ENCODE measurements at regions of chr17 and their contacts with region 1.

Region 1: DNA sequence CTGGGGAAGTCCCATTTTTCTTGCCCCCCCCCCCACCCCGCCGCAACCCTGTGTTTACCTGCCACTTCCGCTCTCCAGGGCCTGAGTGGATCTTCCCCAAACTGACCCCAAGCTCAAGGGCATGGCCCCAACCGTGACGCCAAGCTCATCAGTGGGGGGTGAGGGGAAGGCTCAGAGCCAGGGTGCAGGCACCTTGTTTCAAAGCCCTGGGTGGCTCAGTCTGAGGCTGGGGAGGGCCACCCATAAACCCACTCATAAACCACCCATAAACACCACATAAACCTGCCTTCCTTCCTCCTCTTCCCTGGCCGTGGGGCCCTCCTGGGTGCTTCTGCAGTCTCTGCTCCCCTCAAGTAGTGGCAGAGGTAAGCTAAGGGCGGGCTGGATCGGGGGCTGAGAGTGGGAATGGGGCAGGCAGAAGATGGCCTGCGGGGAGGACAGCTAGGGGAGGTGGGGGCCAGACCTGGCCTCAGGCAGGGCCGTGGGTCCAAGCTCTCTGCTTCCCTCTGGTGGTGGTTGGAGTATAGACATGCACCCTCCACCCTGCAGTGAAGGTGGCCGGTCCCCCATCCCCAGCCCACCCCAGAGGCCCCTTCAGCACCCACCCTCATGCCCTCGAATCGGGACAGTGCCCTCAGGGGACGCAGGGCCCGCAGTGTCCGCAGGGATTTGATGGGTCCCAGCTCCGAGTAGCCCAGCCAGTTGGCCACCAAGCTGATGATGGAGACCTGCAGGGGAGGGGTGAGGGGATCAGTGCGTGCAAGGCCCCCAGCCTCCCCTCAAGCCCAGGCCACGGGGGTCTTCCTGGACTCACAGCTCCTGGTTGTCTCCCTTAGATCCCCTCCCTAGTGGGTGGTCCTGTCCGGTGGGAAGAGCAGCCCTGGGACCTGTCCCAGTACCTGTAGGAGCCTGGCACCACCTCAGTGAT is 14.6 kb upstream of the CD79B start:
- DNase-seq: peak; percentile 44 to 68 (median 63)
- H3K4me3 ChIP-seq: peak overlapping the region in 2 of 7 experiments; percentile 6 to 53
- H3K27ac ChIP-seq: no peak overlapping the region
- H3K4me1 ChIP-seq: peaks cover 0 to 37% (median 23%) of the 10 kb centered on the region in 4 experiments
- H3K27me3 ChIP-seq: no peaks in the 10 kb centered on the region

Region 2: DNA sequence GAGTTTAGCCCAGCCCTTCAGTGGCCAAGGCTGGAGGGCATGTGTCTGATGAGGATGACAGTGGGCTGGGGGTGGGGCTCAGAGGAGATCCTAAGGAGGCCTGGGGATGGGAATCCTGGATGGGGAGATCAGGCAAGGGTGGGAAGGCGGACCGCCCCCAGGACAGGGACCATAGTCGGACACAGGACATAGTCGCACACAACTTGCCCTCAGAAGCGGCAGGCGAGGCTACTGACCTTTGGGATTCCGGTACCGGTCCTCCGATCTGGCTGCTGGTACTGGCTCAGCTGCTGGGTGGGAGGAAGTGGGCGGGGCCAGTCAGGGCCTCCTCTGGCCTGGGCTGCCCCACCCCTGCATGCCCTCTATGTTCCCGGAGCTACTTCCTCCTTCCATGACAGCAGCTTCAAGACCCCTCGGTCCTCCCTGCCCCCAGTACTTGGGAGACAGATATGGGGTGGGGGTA is 15.6 kb before region 1 on chr17:
- CTCF ChIA-PET with region 1: interaction called, 37 read pairs
- POLR2A ChIA-PET with region 1: no interaction called
- DNase-seq: peak; percentile 60 to 74 (median 72)
- H3K4me3 ChIP-seq: peak overlapping the region in 6 of 7 experiments; percentile 52 to 85 (median 68)
- H3K27ac ChIP-seq: peak overlapping the region in 1 of 2 experiments; percentile 34
- H3K4me1 ChIP-seq: peaks cover 0 to 29% (median 27%) of the 10 kb centered on the region in 4 experiments
- H3K27me3 ChIP-seq: no peaks in the 10 kb centered on the region